ENCODE measurements at regions of chr5 and their contacts with region 1.

Region 1: DNA sequence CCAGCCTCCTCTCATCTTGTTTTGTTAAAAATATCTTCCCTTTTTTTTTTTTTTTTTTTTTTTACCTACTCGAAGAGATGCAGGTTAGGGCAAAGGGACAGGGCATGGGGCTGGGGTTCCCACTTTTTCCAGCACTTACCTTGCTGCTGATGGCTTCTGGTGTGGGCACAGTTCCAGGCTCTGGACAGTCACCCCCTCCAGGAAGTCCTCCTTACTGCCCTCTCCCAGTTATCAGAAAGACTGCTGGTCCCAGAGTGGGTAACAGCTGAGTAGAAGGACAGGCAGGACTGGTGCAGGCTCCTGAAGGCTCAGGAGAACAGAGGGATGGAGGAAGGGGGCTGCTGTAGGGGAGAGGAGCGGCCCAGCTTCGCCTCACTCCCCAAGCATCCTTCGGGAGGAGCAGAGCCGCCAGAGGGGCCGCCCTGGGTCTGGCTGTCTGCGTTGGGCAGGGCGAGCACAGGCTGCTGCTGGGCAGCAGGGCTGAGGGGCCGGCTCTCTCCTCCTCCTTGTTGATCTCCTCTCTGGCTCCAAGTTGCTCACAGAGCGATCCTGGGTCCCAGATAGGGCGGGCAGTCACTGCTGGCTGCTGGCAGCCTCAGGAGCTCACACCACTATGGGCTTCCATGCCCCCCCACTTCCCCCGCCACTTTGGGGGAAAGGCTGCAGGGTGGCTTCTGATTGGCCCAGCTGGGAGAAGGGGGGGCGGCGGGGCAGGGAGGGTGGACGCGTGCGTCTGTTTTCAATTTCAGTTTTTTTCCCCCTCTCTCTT is at the start of gene PDGFRB:
- DNase-seq: peak; percentile 82
- ATAC-seq: peak; percentile 94
- H3K4me3 Mint-ChIP-seq: peak within 1 kb of the TSS; percentile 95
- H3K27ac Mint-ChIP-seq: peak within 1 kb of the TSS; percentile 89
- H3K4me1 Mint-ChIP-seq: peaks cover 35% of the 10 kb centered on the region
- H3K27me3 Mint-ChIP-seq: no peaks in the 10 kb centered on the region
- total RNA-seq, gene PDGFRB: 33.4 to 41.5 TPM

Region 2: GRCh38 chr5:150209020-150209635 is 53.7 kb after region 1 on chr5:
- POLR2A ChIA-PET with region 1: interaction called, 10 read pairs
- DNase-seq: peak; percentile 77
- ATAC-seq: peak; percentile 56
- H3K4me3 Mint-ChIP-seq: peak overlapping the region; percentile 65
- H3K27ac Mint-ChIP-seq: peak overlapping the region; percentile 72
- H3K4me1 Mint-ChIP-seq: peaks cover 32% of the 10 kb centered on the region
- H3K27me3 Mint-ChIP-seq: peaks cover 28% of the 10 kb centered on the region

Measured in activated naive CD8-positive, alpha-beta T cell treated with anti-CD3 and anti-CD28 coated beads, Interleukin-2, amount 10 ng/mL, durations not matched to agents 7 days and 5 days (primary cell).